Activated CD4-positive, alpha-beta memory T cell treated with anti-CD3 and anti-CD28 coated beads for 36 hours (primary cell): ENCODE measurements at regions of chr14 and their contacts with region 1.

Region 1: GRCh38 chr14:105203057-105203531 is 22.0 kb upstream of the NUDT14 start:
- DNase-seq: peak; percentile 71
- H3K4me3 Mint-ChIP-seq: no peak overlapping the region
- H3K27ac Mint-ChIP-seq: no peak overlapping the region
- H3K4me1 Mint-ChIP-seq: peaks cover 9% of the 10 kb centered on the region
- H3K27me3 Mint-ChIP-seq: peaks cover 14% of the 10 kb centered on the region

Region 2: GRCh38 chr14:105294142-105294597 is 91.1 kb after region 1 on chr14:
- CTCF ChIA-PET with region 1: no interaction called
- POLR2A ChIA-PET with region 1: no interaction called
- intact Hi-C with region 1: loop called (anchors 5 kb)
- DNase-seq: peak; percentile 85
- H3K4me3 Mint-ChIP-seq: peak overlapping the region; percentile 39
- H3K27ac Mint-ChIP-seq: peak overlapping the region; percentile 76
- H3K4me1 Mint-ChIP-seq: peaks cover 43% of the 10 kb centered on the region
- H3K27me3 Mint-ChIP-seq: no peaks in the 10 kb centered on the region